Upper lobe of right lung (tissue), 1 donor: ENCODE measurements at regions of chr2 and their contacts with region 1.

Region 1: GRCh38 chr2:88590998-88591613 is 36.2 kb downstream of the EIF2AK3 start:
- DNase-seq: no peak
- ATAC-seq: peak; percentile 90
- H3K4me3 ChIP-seq: no peak overlapping the region
- H3K27ac ChIP-seq: no peak overlapping the region
- H3K4me1 ChIP-seq: no peaks in the 10 kb centered on the region
- H3K27me3 ChIP-seq: no peaks in the 10 kb centered on the region
- CTCF ChIP-seq: peak; percentile 83

Region 2: DNA sequence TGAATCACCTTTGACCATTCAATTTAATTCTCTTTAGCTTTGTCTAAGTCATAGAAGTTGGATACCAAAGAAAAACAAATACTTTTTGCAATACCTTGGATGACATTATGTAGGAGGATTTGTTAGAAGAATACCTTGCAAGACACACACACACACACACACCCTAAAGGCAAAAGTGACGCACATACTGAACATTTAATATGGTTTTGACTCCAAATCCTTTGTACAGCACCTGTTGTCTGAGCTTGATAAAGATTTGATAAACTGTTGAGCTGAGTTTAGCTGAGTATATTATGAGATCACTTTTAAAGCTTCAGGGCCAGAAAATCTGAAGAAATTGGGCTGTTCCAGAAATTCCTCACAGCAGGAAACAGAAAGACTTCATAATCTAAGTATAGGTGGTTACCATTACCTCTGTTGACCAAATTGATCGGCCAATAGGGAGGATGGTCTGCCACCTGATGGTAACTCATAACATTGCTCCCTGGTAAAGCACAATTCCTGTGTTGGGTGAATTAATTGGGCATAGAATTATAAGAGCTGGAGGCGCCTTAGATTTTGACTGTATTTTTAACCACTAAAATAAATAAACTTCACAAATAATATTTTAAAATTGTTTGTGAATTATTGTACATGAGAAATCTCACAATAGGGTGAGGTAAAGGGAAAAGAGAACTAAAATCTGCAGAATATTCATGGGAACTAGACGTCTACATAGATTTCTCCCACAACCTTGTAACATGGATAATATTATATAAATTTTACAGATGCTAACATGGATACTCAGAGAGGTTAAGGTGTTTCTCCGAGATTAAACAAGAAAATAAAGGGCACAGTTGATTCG is 78.5 kb after region 1 on chr2:
- intact Hi-C with region 1: loop called (anchors 5 kb)
- DNase-seq: no peak
- ATAC-seq: peak; percentile 63
- H3K4me3 ChIP-seq: no peak overlapping the region
- H3K27ac ChIP-seq: no peak overlapping the region
- H3K4me1 ChIP-seq: no peaks in the 10 kb centered on the region
- H3K27me3 ChIP-seq: no peaks in the 10 kb centered on the region
- CTCF ChIP-seq: peak; percentile 60